Uterus (tissue), 4 donors: ENCODE measurements at regions of chr16 and their contacts with region 1.

Region 1: DNA sequence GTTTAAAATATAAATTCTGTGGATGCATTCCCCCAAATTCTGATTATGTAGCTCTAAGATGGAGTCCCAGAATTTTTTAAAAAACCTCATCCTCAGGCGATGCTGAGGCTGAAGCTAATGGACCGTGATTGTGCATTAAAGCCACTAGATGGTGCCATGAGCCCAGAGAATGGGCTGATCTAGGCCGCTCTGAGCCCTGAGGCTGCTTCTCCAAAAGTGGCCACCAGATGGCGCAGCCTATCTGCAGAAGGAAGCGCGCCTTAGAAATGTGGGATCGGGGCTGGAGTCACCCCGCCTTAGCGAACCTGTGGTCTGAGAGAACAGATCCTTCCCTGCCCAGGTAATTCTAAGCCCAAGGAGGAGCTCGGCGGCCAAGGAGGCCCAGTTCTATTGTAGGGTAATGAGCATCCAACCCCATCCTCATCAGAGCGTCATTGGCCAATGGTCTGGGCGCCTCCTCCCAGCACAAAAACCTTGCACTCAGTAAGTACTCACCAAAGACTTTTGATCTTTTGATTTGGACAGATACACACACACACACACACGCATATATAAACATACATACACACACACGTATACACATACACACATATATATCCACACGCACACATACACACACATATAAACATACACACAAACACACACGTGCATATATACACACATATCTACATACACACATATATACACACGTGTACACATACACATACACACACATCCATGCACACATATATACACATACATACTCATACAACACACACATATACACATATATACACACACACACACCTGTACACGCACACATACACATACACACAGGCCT is 13.7 kb upstream of the MMP2 start:
- DNase-seq: peak; percentile 90 to 91
- H3K4me3 ChIP-seq: no peak overlapping the region
- H3K27ac ChIP-seq: no peak overlapping the region
- H3K4me1 ChIP-seq: no peaks in the 10 kb centered on the region
- H3K27me3 ChIP-seq: no peaks in the 10 kb centered on the region
- CTCF ChIP-seq: peak; percentile 99 to 100 (median 100)
- POLR2A ChIP-seq: peak in 1 of 2 donors; percentile 37

Region 2: GRCh38 chr16:55543472-55543871 is 78.2 kb after region 1 on chr16:
- intact Hi-C with region 1: loop called (anchors 2 kb)
- DNase-seq: no peak
- H3K4me3 ChIP-seq: no peak overlapping the region
- H3K27ac ChIP-seq: no peak overlapping the region
- H3K4me1 ChIP-seq: no peaks in the 10 kb centered on the region
- H3K27me3 ChIP-seq: no peaks in the 10 kb centered on the region
- CTCF ChIP-seq: peak; percentile 54 to 71 (median 56)
- POLR2A ChIP-seq: no peak

Region 3: GRCh38 chr16:55559233-55559632 is 93.9 kb after region 1 on chr16:
- intact Hi-C with region 1: no loop called
- DNase-seq: no peak
- H3K4me3 ChIP-seq: no peak overlapping the region
- H3K27ac ChIP-seq: no peak overlapping the region
- H3K4me1 ChIP-seq: no peaks in the 10 kb centered on the region
- H3K27me3 ChIP-seq: no peaks in the 10 kb centered on the region
- CTCF ChIP-seq: no peak
- POLR2A ChIP-seq: no peak

Region 4: DNA sequence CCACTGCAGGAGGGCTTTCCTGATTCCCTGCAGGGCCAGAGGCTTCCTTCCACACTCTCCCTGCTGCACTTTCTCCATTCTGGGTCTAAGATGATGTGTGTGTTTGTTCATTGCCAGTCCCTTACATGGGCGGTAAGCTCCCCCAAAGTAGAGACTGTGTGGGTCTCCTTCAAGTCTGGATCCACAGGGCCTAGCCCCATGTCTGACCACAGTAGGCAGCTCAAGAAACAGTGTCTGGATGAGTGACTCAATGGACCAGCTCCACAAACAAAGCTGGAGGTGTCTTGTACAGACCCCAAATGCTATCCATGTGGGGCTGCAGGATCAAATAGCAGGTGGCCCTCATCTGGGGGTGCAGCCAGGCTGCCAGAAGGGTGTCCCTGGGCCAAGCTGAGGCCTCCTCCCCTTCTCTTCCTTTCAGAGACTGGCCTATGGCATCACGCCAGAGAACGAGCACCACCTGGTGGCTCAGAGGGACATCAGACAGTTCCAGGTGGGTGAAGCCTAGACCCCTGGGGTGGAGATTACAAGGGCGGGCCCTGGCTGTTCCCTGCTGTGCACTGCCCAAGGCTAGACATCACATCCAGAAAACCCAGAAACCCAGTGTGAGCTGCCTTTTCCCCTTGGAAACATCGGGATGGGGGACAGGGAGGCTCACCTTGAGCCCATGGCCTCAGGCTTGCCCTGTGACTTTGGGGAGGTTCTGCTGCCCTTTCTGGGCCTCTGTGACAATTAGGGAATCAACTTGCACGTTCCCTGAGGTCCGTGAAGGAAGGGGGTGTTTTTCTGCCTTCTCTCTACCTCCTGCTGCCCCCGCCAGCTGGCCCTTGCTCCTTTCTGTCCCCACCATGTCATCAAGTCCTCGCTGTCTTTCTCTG is 236.4 kb after region 1 on chr16:
- intact Hi-C with region 1: loop called (anchors 10 kb)
- DNase-seq: peak; percentile 31 to 37
- H3K4me3 ChIP-seq: no peak overlapping the region
- H3K27ac ChIP-seq: no peak overlapping the region
- H3K4me1 ChIP-seq: no peaks in the 10 kb centered on the region
- H3K27me3 ChIP-seq: no peaks in the 10 kb centered on the region
- CTCF ChIP-seq: peak; percentile 29 to 47 (median 36)
- POLR2A ChIP-seq: no peak